ENCODE measurements at regions of chr16 and their contacts with region 1.

Region 1: DNA sequence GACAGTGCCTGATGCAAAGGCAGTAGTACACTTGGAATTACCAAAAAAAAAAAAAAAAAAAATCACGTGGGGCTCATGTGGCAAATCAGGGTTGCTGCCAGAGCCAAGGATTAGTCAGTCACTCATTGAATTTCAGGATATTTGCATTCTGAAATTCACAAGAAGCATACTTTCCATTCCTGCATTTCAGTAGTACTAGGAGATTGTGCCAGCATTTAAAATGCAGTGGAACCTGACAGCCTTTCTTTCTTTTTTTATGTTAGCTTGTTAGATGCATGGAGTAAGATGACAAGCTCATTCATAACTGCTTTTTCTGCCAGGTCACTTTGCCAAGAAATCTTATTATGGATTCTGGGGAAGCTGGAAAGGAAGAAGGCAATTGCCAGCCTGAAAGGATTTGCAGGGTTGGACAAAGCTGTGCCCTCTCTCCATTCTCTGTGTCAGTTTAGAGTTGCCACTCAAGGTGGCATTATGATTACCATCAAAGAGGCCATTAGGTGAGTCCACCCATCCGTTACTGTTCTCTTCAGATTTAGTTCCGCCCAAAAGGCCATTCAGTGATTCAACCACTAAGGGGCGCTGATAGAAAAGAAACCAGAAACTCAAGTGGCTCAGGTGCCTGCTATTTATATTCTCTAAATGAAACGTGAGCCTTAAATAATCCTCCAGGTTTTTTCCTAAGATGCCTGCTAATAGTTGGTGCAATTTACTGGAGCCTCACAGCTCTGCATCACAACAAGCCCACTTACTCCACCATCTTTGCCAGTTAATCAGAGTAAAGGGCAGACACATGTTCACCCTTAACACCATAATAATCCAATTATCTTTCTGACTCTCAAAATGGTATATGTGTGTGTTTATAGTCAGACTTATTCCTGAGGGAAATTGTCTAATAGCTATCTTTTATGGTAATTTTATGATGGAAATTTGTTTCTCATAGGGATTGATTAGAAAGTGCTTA is 59.0 kb downstream of the TANGO6 start:
- DNase-seq: peak in 4 of 10 donors; percentile 14 to 23 (median 16)

Region 2: DNA sequence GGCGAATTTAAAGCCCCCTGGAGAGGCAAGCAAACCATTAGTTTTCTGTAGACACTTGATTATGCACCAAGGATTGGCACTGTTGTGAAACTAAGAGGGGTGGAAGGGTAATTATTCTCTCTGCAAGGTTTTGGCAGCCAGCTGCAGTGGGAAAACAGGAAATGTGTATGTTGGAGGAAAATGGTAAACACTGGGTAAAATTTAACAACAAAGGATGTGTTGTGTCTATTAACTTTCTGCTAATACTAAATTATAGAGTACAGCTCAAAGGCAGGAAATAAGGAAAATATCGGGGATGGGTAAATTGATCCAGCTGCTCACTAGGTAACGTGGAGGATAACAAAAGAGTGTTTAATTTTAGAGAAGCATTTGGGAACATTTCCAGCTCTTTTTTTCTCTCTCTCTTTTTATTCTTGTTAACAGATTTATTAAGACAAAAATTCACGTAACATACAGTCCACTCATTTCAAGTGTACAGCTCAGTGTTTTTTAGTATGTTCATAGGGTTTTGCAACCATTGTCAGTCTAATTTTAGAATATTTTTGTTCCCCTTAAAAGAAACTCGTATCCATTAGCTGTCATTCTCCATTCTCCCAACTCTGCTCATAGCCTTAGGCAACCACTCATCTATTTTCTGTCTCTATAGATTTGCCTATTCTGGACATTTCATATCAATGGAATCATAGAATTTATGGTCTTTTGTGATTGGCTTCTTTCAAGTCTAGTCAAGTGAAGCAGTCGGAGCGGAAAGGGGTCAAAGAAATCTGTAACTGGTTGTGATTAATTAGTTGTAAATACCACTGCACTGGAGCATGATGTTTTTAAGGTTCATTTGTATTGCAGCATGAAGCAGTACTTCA is 17.2 kb before region 1 on chr16:
- intact Hi-C with region 1: no loop called
- DNase-seq: no peak

Region 3: DNA sequence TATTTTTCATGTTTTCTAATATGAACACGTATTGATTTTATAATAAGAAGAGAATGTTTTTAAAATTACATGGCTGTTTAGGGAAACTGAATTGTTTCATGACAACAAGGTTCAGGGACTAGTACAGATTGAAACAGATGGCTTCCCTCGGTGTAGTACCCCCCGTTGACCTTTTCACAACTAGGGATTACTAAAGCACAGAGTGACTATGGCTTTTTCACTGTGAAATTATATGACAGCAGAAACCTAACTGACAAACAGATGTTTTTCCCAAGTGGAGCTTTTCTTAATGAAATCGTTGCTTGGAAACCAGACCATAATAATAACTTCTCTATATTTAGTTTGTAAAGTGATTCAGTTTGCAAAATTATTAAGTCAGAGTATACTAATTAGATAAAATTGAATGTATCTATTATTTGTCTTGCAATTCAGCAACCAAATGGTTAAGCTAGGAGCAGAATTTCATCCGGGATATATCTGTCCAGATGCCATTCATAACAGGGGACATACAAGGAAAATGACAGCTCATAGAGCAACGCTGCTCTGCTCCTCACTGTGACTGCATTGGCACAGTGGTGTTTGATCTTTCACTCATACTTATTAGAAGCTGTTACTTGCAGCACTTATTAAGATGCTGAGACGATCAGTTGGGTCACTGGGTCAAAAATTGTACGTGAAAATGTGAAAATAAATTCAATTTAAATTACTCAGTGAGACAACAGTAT is 52.8 kb after region 1 on chr16:
- intact Hi-C with region 1: no loop called
- DNase-seq: no peak

Region 4: GRCh38 chr16:69105489-69106361 is 203.4 kb after region 1 on chr16 and contains the start of gene HAS3:
- intact Hi-C with region 1: loop called (anchors 1 kb)
- DNase-seq: peak in 6 of 10 donors; percentile 26 to 89 (median 69)

Region 5: GRCh38 chr16:69123910-69124309 is 221.6 kb after region 1 on chr16:
- intact Hi-C with region 1: loop called (anchors 1 kb)
- DNase-seq: peak in 2 of 10 donors; percentile 42 to 45